WTC11 (cell line): ENCODE measurements at regions of chr9 and their contacts with region 1.

Region 1: DNA sequence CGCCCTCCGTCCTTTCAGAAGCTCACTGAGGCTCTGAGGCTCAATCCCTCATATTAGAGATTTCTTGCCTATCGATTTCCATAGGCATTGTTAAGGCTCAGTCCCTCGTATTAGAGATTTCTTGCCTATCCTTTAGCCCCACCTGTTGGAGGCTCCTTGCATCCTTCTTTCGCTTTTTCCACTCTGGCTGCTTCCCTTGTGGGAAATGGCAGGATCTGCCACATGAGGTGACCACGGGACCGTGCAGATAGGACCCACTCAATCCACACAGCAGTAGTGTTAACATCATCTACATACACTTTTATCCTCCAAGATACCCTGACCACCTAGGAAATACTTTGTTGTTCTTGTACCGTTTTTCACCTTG is 19.5 kb downstream of the IFT74 start:
- DNase-seq: peak; percentile 64
- ATAC-seq: peak; percentile 58
- H3K4me3 Mint-ChIP-seq: peak overlapping the region; percentile 71
- H3K27ac Mint-ChIP-seq: peak overlapping the region; percentile 99
- H3K4me1 Mint-ChIP-seq: peaks cover 34% of the 10 kb centered on the region
- H3K27me3 Mint-ChIP-seq: no peaks in the 10 kb centered on the region
- CTCF ChIP-seq: peak; percentile 23; the same call in 1 of the 2 replicates

Region 2: DNA sequence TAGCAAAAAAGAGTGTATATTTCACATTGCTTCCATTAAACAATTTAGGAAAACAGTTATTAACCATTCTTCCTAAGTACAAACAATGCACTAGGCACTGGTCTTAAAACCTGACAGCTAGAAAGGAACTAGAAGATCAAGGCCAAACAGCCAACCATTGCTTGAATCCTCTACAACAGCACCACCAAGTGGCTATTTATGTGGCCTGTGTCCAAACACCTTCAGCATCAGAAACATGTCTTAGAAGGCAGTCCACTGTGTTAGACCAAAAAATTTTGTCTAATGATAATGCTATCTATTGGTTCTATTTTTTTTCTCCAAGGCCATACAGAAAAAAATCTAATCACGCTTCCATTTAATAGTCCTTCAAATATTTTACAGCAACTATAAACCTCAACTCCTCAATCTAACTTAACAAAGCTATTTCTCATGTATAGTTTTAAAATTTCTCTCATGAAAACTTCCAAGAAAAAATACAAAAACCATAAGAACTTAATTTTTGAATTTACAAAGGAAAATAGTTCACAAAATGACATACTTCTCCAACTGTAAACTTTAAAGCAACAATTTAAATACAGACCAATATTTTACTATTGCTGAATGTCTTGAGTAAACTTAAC is 119.2 kb before region 1 on chr9:
- CTCF ChIA-PET with region 1: interaction called, 18 read pairs
- POLR2A ChIA-PET with region 1: no interaction called
- DNase-seq: peak; percentile 46
- ATAC-seq: peak; percentile 81
- H3K4me3 Mint-ChIP-seq: no peak overlapping the region
- H3K27ac Mint-ChIP-seq: no peak overlapping the region
- H3K4me1 Mint-ChIP-seq: no peaks in the 10 kb centered on the region
- H3K27me3 Mint-ChIP-seq: no peaks in the 10 kb centered on the region
- CTCF ChIP-seq: peak; percentile 48

Region 3: DNA sequence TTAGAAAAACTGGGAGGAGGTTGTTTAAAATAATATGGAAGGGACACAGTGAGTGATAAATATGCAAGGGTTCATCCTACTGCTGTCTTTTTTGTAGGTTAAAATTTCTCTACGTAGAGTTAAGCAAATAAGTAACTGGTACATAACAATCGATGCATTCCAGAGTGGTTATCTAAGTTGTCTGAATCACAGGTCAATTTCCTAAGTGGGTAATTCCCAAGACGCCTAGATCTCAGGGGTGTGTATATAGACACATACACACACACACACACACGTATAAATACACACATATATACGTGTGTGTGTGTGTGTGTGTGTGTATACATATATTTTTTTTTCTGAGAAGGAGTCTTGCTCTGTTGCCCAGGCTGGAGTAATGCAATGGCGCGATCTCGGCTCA is 105.4 kb before region 1 on chr9:
- CTCF ChIA-PET with region 1: no interaction called
- POLR2A ChIA-PET with region 1: no interaction called
- DNase-seq: no peak
- ATAC-seq: no peak
- H3K4me3 Mint-ChIP-seq: no peak overlapping the region
- H3K27ac Mint-ChIP-seq: no peak overlapping the region
- H3K4me1 Mint-ChIP-seq: no peaks in the 10 kb centered on the region
- H3K27me3 Mint-ChIP-seq: no peaks in the 10 kb centered on the region
- CTCF ChIP-seq: no peak

Region 4: GRCh38 chr9:26892251-26893029 is 83.2 kb before region 1 on chr9 and contains the start of gene CAAP1:
- CTCF ChIA-PET with region 1: interaction called, 29 read pairs
- POLR2A ChIA-PET with region 1: interaction called, 26 read pairs
- DNase-seq: peak; percentile 92
- ATAC-seq: peak; percentile 91
- H3K4me3 Mint-ChIP-seq: peak within 1 kb of the TSS; percentile 99
- H3K27ac Mint-ChIP-seq: peak within 1 kb of the TSS; percentile 100
- H3K4me1 Mint-ChIP-seq: peaks cover 19% of the 10 kb centered on the region
- H3K27me3 Mint-ChIP-seq: no peaks in the 10 kb centered on the region
- CTCF ChIP-seq: no peak
- total RNA-seq, gene CAAP1: 33.2 to 45.4 TPM (median 36.1 TPM) in 3 replicates

Region 5: DNA sequence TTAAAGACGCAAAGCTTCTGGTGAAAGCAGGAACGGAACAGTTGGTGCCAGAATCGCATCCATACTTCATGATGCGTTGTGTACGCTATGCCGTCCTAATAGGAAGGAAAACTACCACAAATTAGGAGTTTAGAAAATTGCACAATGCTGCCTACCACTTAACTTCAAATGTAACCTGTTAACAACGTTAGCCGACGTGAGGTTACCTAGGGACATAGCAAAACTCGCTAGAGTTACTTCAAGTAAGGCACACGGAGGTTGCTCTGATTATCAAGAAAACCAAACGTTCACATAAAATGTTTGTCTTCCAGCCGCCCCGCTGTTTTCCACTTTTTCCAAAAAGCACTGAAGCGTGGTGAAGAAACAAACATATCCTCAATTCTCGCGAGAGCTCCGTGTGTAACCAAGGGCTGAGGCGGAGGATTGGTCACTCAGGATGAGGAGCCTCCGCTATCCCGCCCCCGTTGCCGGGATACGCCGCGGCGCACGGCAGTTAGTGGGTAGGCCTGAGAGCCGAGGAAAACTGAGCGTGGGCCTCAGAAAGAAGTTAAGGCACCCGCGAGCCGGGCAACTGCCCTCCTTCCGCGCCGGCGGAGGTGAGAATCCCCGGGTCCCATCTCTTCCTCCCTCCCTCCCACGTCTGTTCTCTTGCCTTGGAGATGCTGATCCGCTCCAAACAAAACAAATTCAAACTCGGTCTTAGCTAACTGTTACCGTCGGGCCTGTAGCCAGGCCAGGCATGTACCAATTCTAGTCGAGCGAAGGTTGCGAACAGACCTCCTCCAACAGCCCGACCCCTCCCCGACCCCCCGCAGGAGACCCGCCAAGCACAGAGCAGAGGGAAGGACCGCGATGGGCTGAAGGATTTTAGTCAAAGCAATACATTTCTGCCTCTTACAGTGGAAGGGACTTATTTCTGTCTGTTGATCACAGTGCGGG is 19.5 kb before region 1 on chr9 and contains the start of gene IFT74:
- CTCF ChIA-PET with region 1: interaction called, 18 read pairs
- POLR2A ChIA-PET with region 1: interaction called, 12 read pairs
- DNase-seq: peak; percentile 90
- ATAC-seq: peak; percentile 98
- H3K4me3 Mint-ChIP-seq: peak within 1 kb of the TSS; percentile 90
- H3K27ac Mint-ChIP-seq: peak within 1 kb of the TSS; percentile 93
- H3K4me1 Mint-ChIP-seq: peaks cover 14% of the 10 kb centered on the region
- H3K27me3 Mint-ChIP-seq: no peaks in the 10 kb centered on the region; the same call in 1 of the 2 replicates
- CTCF ChIP-seq: no peak
- total RNA-seq, gene IFT74: 15.2 to 21.6 TPM (median 17.3 TPM) in 3 replicates

Region 6: DNA sequence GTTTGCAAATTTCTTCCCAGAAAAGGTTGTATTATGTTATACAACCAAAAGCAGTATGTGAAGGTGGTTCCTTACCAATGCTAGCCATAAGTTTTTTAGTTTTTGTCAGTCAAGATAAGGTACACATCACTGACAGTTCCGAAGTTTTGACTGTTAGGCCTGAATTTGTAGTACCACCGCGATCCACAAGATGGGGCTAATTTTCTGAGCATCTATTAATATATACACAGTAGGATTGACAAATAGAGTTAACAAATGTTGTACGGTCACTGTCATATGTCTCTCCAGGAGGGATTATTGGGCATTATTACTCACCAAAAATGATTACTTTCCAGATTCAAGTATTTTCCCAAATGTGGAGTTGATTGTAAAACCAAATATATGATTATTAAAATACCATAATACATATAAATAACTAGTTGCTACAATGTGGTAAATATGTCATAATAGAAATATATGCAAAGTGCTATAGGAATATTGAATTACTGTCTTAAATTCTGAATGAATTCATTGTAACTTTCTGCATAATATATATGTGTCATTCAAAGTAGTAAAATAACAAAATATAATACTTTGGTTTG is 58.2 kb after region 1 on chr9:
- CTCF ChIA-PET with region 1: no interaction called
- POLR2A ChIA-PET with region 1: no interaction called
- DNase-seq: peak; percentile 65
- ATAC-seq: peak; percentile 38; the same call in 1 of the 2 replicates
- H3K4me3 Mint-ChIP-seq: no peak overlapping the region
- H3K27ac Mint-ChIP-seq: no peak overlapping the region
- H3K4me1 Mint-ChIP-seq: no peaks in the 10 kb centered on the region
- H3K27me3 Mint-ChIP-seq: no peaks in the 10 kb centered on the region
- CTCF ChIP-seq: peak; percentile 54; the same call in 1 of the 2 replicates

Region 7: GRCh38 chr9:27514551-27514950 is 538.9 kb after region 1 on chr9:
- CTCF ChIA-PET with region 1: no interaction called
- POLR2A ChIA-PET with region 1: no interaction called
- DNase-seq: no peak
- ATAC-seq: no peak
- H3K4me3 Mint-ChIP-seq: no peak overlapping the region
- H3K27ac Mint-ChIP-seq: no peak overlapping the region
- H3K4me1 Mint-ChIP-seq: peaks cover 19% of the 10 kb centered on the region
- H3K27me3 Mint-ChIP-seq: no peaks in the 10 kb centered on the region
- CTCF ChIP-seq: no peak